SK-N-SH (cell line): ENCODE measurements at regions of chr6 and their contacts with region 1.

Region 1: GRCh38 chr6:99349171-99350141 is at the start of gene FAXC:
- DNase-seq: peak; percentile 88
- H3K4me3 ChIP-seq: peak within 1 kb of the TSS; percentile 79 to 89
- H3K27ac ChIP-seq: peak within 1 kb of the TSS in 1 of 2 experiments; percentile 88; a peak in 2 of 4 replicates
- H3K4me1 ChIP-seq: peaks cover 0 to 7% of the 10 kb centered on the region in 2 experiments; a peak in 2 of 4 replicates
- H3K27me3 ChIP-seq: no peaks in the 10 kb centered on the region; the same call in 1 of the 2 replicates
- CTCF ChIP-seq: peak; percentile 43
- EP300 ChIP-seq: no peak
- RAD21 ChIP-seq: 0 out of 2 replicates have a peak, but pooled peaks have one; percentile 22
- polyA plus RNA-seq, gene FAXC: 9.0 and 9.1 TPM in 2 replicates

Region 2: GRCh38 chr6:99393698-99394531 is 44.5 kb after region 1 on chr6 and contains the start of gene COQ3:
- CTCF ChIA-PET with region 1: interaction called, 5 read pairs
- POLR2A ChIA-PET with region 1: interaction called, 15 read pairs
- DNase-seq: peak; percentile 92
- H3K4me3 ChIP-seq: peak within 1 kb of the TSS; percentile 68 to 74
- H3K27ac ChIP-seq: peak within 1 kb of the TSS; percentile 76 to 95
- H3K4me1 ChIP-seq: no peaks in the 10 kb centered on the region; a peak in 2 of 4 replicates
- H3K27me3 ChIP-seq: no peaks in the 10 kb centered on the region
- CTCF ChIP-seq: no peak
- EP300 ChIP-seq: no peak
- RAD21 ChIP-seq: no peak
- polyA plus RNA-seq, gene COQ3: 6.4 and 8.0 TPM in 2 replicates

Region 3: DNA sequence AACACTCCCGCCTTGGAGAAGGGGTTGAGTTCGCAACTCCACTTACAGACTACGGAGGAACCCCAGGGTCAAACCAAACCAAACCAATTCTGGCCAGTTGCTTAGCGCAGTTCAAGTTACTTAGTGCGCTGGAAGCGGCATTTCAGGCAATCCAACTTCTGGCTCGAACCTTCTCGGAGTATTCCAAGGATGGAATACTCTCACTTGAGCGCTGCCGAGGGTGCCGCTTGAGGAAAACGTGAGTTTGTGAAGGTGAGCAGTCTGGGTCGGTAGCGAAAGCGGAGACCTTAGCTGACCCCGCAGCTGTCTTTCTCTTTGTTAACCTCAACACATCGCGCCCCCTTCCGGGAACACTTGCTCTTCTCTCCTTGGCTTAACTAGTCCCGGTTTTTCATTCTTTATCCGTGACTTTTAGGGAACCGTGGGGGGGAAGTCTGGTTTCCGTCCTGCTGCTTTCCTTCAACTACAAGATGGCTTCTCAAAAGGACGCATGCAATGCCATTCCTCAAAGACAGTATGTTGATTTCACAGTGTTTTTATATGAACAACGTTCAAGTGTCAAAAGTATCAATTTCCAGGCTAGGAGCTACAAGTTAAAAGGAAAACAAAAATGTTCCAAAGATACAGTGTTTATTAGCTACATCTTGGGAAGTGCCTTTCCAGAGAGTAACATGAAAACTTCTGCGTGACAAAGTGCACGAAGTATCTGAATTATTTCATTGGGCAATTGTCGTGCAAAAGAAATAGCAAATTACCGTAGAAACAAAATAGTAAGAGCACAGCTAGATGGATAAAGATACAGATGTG is 76.4 kb after region 1 on chr6:
- CTCF ChIA-PET with region 1: interaction called, 11 read pairs
- POLR2A ChIA-PET with region 1: interaction called, 5 read pairs
- DNase-seq: peak; percentile 58
- H3K4me3 ChIP-seq: peak overlapping the region; percentile 90 to 99
- H3K27ac ChIP-seq: peak overlapping the region; percentile 97 to 99
- H3K4me1 ChIP-seq: peaks cover 8 to 13% of the 10 kb centered on the region in 2 experiments
- H3K27me3 ChIP-seq: no peaks in the 10 kb centered on the region
- CTCF ChIP-seq: peak; percentile 60
- EP300 ChIP-seq: peak in 1 of 2 experiments; percentile 21; a peak in 1 of 4 replicates
- RAD21 ChIP-seq: peak; percentile 55